ENCODE measurements at regions of chr18 and their contacts with region 1.

Region 1: DNA sequence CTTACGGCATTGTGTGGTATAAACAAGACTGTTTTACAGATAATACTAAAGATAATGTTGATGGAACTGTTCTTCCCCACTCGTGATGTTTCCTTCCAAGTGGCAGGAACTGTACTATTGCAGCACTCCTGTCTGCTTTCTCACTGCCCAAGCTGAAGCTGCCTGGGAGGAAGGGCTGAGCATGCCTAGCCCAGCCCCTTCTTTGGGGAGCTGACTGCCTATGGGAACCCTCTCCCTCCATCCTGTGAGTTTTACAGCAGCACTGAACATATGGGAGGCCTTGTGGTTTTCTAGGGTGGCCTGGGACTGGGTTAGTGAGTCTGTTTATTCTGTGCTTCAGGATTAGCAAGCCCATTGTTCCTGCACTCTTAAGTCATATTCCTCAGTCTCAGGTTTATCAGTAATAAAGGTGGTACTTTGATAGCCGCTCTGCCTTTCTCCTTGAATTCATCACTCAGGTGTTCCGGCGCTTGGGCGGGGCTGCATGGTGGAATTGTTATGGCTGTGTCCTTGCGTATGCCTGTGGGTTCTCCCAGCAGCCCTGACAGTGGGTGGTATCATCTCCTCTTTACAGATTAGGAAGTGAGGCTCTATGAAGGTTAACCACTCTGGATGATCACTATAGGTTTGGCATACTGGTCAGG is 379.7 kb downstream of the PTPRM start:
- DNase-seq: no peak
- ATAC-seq: no peak

Region 2: GRCh38 chr18:7414459-7414858 is 532.4 kb before region 1 on chr18:
- intact Hi-C with region 1: no loop called
- DNase-seq: no peak
- ATAC-seq: peak; percentile 68

Region 3: DNA sequence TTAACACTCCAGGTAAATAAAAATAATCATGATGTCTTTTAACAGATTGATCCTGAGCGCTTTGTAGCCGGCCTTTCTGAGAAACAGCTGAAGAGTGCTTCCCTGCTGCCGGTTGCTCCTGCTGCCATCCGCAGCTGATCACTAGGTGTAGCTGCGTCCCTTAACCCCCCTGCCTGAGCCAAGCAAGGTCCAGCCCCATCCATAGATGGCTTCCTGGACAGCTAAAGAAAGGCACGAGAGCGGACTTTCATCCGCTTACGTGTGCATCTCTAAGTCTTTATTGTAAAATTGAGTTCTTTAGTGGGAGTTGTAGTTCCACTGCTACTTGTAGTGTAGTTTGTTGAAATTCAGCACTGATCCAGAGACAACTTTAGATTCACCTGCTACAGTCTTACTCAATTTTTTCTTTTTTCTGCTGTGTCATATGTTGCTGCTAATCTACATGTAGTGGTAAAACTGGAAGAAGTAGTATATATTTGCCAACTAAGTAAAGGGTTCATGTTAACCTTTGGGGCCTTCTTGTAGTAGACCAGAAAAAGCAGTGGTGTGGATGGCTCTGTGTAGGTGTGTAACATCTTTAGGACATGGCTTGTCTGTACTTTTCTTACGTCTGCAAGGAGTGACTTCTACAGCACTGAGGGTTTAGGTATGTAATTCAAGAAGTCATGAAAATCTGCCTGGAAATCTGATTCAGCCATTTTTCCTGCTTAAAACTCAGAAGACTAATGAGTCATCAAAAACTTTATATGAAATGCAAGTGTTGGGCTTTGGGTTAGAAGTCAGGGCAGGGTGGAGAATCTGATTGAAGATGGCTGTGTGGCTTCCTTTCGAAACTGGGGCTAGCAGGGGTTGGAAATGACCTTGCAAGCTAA is 371.5 kb before region 1 on chr18:
- intact Hi-C with region 1: loop called (anchors 10 kb)
- DNase-seq: no peak
- ATAC-seq: no peak

Region 4: DNA sequence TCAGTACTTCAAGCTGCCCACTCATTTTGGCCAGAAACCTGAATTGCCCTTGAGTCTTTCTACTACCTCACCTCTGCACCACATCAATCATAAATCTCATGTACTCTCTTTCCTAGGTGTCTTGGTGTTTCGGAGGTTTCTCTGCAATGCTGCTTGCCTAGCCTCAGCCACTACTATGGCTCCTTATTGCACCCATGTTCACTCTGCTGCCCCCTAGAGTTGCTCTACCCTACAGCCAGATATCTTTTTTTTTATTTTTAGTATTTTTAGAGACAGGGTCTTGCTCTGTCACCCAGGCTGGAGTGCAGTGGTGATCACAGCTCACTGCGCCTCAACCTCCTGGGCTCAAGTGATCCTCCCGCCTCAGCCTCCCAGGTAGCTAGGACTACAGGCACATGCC is 33.3 kb after region 1 on chr18:
- intact Hi-C with region 1: no loop called
- DNase-seq: no peak
- ATAC-seq: no peak

Region 5: GRCh38 chr18:8003878-8004675 is 57.2 kb after region 1 on chr18:
- intact Hi-C with region 1: loop called (anchors 10 kb)
- DNase-seq: no peak
- ATAC-seq: peak; percentile 49

Measured in Right ventricle myocardium inferior (tissue), 1 donor.